Panc1 (cell line): ENCODE measurements at regions of chr17 and their contacts with region 1.

Region 1: GRCh38 chr17:15260376-15261257 is 4.5 kb downstream of the PMP22 start:
- DNase-seq: no peak
- ATAC-seq: peak; percentile 90
- H3K4me3 ChIP-seq: peak overlapping the region; percentile 56 to 68
- H3K27ac ChIP-seq: 0 out of 2 replicates have a peak overlapping the region, but pooled peaks have one; percentile 44
- H3K4me1 ChIP-seq: peaks cover 9% of the 10 kb centered on the region
- H3K27me3 ChIP-seq: peaks cover 8% of the 10 kb centered on the region
- CTCF ChIP-seq: peak; percentile 95

Region 2: DNA sequence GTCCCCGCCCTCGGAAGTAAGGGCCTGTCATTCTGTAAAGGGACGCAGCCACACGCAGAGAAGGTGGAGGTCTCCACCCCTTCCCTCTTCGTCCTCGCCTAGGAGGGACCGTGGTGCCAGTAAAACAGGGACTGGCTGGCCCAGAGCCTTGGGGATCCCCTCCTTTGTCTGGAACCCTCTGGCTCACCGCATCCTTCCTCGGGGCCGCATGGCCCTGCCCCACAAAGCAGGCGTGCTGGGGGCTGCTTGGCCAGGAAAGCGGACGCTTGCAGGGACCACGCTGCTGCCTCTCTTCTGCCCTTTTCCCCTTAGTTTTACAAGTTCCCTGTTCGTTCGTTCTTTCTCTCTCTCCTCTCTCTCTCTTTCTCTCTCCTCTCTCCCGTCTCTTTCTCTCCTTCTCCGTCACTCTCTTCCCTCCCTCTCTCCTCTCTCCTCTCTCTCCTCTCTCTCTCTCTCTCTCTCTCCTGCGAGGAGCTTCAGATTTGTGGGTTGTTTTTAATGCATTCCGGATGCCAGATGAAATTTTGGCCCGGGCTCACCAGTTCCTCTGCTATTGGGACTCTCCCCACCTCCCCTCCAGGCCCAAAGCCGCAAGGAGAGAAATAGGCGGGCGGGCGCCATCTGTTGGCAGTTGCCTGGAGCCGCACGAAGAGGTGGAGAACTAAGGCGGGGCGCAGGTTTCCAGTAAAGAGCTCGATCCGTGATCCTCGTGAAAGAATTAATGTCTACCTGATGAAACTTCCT is 241.9 kb after region 1 on chr17:
- CTCF ChIA-PET with region 1: interaction called, 6 read pairs
- POLR2A ChIA-PET with region 1: no interaction called
- in situ Hi-C with region 1: no loop called
- intact Hi-C with region 1: loop called (anchors 2 kb)
- DNase-seq: no peak
- ATAC-seq: peak; percentile 95
- H3K4me3 ChIP-seq: no peak overlapping the region
- H3K27ac ChIP-seq: no peak overlapping the region
- H3K4me1 ChIP-seq: peaks cover 4% of the 10 kb centered on the region; the same call in 1 of the 2 replicates
- H3K27me3 ChIP-seq: no peaks in the 10 kb centered on the region
- CTCF ChIP-seq: peak; percentile 95